Activated naive CD8-positive, alpha-beta T cell treated with anti-CD3 and anti-CD28 coated beads, Interleukin-2, amount 10 ng/mL, durations not matched to agents 7 days and 5 days (primary cell): ENCODE measurements at regions of chr3 and their contacts with region 1.

Region 1: DNA sequence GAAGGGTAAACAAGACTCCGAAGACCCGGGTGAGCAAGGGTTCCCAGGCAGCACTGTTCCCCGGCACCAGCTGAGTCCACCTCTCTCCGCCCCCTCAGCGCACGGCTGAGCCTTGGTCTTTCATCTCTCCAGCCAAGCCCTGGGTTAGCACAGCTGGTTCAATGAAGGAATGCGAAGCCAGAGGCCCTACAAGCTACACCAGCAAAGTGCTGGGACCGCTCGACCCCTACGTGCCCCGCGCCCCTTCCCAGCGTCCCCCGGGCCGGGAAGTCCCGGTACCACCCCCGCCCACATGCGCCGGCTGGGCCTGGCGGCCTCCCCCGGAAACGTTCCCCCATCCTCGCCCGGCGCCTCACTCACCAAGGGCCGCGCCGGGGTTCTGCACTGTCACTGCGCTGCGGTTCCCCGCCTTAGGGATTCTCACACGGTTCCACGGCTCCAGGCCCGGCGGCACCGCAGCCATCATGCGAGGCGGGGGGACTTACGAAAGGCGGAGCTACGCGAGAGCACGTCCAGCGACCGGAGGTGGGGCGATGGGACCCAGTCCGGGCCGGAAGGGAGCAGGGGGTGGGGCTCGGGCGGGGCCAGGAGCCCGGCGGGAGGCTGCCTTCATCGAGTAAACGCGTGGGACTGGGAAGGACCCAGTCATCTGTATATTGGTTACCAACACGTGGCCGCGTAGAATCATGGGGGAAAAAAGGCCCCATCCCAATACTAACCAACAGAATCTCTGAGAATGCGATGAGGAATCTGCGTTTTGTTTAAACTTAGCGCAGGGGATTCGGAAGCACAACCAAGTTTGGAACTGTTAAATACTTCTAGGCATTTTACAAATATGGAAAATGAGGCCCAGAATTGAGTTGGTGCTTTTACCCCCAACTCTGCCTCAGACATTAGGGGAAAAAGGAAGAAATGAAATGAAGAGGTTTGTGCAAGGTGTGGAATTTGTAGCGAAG is 28.7 kb downstream of the GTPBP8 start:
- DNase-seq: peak; percentile 83
- ATAC-seq: peak; percentile 91
- H3K4me3 Mint-ChIP-seq: peak overlapping the region; percentile 89
- H3K27ac Mint-ChIP-seq: peak overlapping the region; percentile 88
- H3K4me1 Mint-ChIP-seq: peaks cover 31% of the 10 kb centered on the region
- H3K27me3 Mint-ChIP-seq: no peaks in the 10 kb centered on the region

Region 2: GRCh38 chr3:112894258-112894657 is 125.2 kb before region 1 on chr3:
- POLR2A ChIA-PET with region 1: no interaction called
- DNase-seq: no peak
- ATAC-seq: no peak
- H3K4me3 Mint-ChIP-seq: no peak overlapping the region
- H3K27ac Mint-ChIP-seq: no peak overlapping the region
- H3K4me1 Mint-ChIP-seq: no peaks in the 10 kb centered on the region
- H3K27me3 Mint-ChIP-seq: peaks cover 2% of the 10 kb centered on the region

Region 3: DNA sequence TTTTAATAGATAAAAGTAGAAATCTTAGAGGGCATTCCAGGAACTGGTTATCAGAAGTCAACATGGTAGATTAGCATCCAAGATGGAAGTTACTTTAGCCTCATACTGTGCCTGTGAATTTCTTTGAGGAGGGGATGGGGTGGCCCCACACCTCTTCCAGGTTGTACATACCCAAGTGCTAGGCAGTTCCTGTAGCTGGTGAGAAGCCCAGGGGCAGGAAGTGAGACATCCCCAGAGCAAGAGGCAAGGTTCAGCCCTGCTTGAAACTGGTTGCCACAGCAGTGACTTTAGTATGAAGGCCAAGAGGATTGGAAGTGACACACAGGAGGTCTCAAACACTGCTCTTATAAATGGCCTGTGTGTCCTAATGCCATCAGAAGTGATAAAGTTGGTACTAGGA is 16.8 kb before region 1 on chr3:
- POLR2A ChIA-PET with region 1: interaction called, 13 read pairs
- DNase-seq: peak; percentile 33
- ATAC-seq: peak; percentile 91
- H3K4me3 Mint-ChIP-seq: peak overlapping the region; percentile 22
- H3K27ac Mint-ChIP-seq: peak overlapping the region; percentile 85
- H3K4me1 Mint-ChIP-seq: peaks cover 59% of the 10 kb centered on the region
- H3K27me3 Mint-ChIP-seq: no peaks in the 10 kb centered on the region